Heart left ventricle (tissue), 16 donors: ENCODE measurements at regions of chr14 and their contacts with region 1.

Region 1: GRCh38 chr14:70816525-70816924 is 7.2 kb upstream of the MAP3K9 start:
- DNase-seq: no peak
- ATAC-seq: no peak
- H3K4me3 ChIP-seq: no peak overlapping the region
- H3K27ac ChIP-seq: no peak overlapping the region
- H3K4me1 ChIP-seq: peaks cover 0 to 13% (median 7%) of the 10 kb centered on the region in 12 donors
- H3K27me3 ChIP-seq: peaks cover 0 to 10% (median 0%) of the 10 kb centered on the region in 9 donors
- CTCF ChIP-seq: no peak
- POLR2A ChIP-seq: no peak

Region 2: DNA sequence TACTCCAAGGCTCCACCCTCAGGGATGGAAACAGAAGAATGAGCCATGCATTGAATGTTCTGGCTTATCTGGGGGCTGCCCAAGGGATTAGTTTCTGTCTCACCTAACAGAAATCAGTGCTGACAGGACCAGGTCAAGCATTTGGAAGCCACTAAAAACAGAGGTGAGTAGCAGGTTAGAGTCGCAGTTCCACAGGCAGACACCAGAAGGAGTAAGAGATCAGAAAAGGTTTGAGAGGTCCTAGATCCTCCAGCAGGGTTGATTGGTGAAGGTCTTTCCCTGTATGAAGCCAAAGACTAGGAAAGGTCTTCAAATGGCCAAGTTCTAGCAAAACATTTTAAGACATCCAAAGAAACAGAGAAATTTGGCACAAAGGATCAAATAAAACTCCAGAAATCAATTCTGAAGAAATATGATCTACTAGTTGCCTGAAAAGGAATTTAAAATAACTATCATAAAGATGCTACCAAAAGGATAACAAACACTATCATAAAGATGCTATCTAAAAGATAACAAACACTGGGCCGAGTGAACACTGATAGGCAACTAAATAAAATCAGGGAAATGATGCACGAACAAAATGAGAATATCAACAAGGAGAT is 194.3 kb before region 1 on chr14:
- intact Hi-C with region 1: loop called (anchors 2 to 10 kb)
- DNase-seq: no peak
- ATAC-seq: peak in 3 of 4 donors; percentile 47 to 77 (median 56)
- H3K4me3 ChIP-seq: no peak overlapping the region
- H3K27ac ChIP-seq: no peak overlapping the region
- H3K4me1 ChIP-seq: peaks cover 0 to 7% (median 0%) of the 10 kb centered on the region in 12 donors
- H3K27me3 ChIP-seq: no peaks in the 10 kb centered on the region
- CTCF ChIP-seq: peak; percentile 45 to 70 (median 62)
- POLR2A ChIP-seq: no peak

Region 3: DNA sequence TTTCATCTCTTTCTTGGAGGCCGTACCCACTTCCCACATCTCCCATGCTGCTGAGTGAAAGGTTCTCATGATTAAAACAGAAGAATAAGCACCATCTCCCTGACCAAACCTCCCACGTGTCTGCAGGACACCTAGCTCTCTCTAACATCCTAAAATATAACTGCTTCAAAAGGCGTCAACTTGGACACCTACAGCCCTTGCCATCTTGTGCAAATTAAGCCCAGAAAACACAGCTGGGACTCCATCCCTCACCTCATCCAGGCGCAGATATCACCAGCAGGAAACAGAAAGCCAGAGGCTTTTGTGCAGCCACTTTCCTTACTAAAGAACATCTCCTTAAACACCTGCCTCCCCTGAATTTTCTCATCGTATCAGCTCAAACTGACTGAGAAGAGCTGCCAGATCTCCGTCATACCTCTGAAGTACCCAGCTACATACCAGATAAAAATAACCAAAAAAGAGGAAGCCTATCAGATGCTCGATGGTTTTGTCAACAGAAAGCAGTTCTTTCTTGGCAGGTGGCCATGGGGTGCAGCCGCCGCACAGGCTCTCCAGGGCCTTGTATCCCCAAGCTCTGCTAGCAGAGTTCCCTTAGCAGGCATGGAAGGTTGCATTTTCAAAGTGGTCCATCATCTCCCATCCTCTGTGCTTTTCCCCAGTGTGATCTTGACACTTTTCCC is 36.0 kb before region 1 on chr14:
- intact Hi-C with region 1: no loop called
- DNase-seq: peak in 3 of 5 donors; percentile 20 to 35 (median 28)
- ATAC-seq: no peak
- H3K4me3 ChIP-seq: no peak overlapping the region
- H3K27ac ChIP-seq: peak overlapping the region in 1 of 12 donors; percentile 7
- H3K4me1 ChIP-seq: peaks cover 0 to 18% (median 0%) of the 10 kb centered on the region in 12 donors
- H3K27me3 ChIP-seq: no peaks in the 10 kb centered on the region
- CTCF ChIP-seq: no peak
- POLR2A ChIP-seq: no peak

Region 4: DNA sequence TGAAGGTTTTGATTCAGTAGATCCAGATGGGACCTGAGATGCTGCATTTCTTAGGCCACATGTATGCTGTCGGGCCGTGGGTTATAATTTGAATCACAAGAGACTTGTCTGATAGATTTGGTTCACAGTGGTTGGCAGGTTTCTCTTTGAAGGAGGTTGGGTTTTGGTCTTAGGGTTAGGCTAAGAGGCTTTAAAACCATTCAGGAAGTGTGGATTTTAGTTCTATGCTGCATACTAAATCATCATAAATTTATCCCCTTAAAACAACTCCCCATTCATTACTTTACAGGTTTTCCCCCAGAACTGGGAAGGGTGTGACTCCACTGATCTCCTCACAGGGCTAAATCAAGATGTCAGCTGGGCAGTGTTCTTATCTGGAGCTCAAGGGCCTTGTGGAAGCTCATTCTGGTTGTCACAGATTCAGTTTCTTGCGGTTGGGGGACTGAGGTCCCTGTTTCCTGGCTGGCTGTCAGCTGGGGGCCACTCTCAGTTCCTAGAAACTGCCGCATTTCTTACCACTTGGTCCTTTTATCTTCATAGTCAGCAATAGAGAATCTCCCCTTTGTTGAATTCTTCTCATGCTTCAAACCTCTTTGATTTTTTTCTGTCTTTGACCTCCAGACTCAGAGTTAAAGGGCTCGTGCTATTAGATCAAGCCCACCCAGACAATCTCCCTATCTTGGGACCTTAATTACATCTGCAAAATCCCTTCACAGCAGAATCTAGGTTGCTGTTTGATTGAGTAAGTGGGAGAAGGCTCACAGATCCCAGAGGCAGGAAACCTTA is 70.1 kb after region 1 on chr14:
- intact Hi-C with region 1: no loop called
- DNase-seq: peak in 1 of 5 donors; percentile 29
- ATAC-seq: peak in 1 of 4 donors; percentile 23
- H3K4me3 ChIP-seq: peak overlapping the region in 1 of 12 donors; percentile 8
- H3K27ac ChIP-seq: peak overlapping the region in 1 of 12 donors; percentile 87
- H3K4me1 ChIP-seq: peaks cover 0 to 86% (median 1%) of the 10 kb centered on the region in 12 donors
- H3K27me3 ChIP-seq: no peaks in the 10 kb centered on the region
- CTCF ChIP-seq: no peak
- POLR2A ChIP-seq: no peak

Region 5: GRCh38 chr14:70907176-70907995 is 90.9 kb after region 1 on chr14 and contains the start of gene PCNX1:
- intact Hi-C with region 1: loop called in 8 of 10 experiments (anchors 2 to 5 kb)
- DNase-seq: peak; percentile 90 to 94 (median 91)
- ATAC-seq: peak; percentile 82 to 91 (median 86)
- H3K4me3 ChIP-seq: peak within 1 kb of the TSS; percentile 78 to 99 (median 94)
- H3K27ac ChIP-seq: peak within 1 kb of the TSS; percentile 80 to 98 (median 94)
- H3K4me1 ChIP-seq: peaks cover 0 to 66% (median 50%) of the 10 kb centered on the region in 12 donors
- H3K27me3 ChIP-seq: no peaks in the 10 kb centered on the region
- CTCF ChIP-seq: peak; percentile 73 to 97 (median 89)
- POLR2A ChIP-seq: peak in 1 of 2 donors; percentile 37
- total RNA-seq, gene PCNX1: 36.3 to 64.7 (median 53.4) TPM

Region 6: DNA sequence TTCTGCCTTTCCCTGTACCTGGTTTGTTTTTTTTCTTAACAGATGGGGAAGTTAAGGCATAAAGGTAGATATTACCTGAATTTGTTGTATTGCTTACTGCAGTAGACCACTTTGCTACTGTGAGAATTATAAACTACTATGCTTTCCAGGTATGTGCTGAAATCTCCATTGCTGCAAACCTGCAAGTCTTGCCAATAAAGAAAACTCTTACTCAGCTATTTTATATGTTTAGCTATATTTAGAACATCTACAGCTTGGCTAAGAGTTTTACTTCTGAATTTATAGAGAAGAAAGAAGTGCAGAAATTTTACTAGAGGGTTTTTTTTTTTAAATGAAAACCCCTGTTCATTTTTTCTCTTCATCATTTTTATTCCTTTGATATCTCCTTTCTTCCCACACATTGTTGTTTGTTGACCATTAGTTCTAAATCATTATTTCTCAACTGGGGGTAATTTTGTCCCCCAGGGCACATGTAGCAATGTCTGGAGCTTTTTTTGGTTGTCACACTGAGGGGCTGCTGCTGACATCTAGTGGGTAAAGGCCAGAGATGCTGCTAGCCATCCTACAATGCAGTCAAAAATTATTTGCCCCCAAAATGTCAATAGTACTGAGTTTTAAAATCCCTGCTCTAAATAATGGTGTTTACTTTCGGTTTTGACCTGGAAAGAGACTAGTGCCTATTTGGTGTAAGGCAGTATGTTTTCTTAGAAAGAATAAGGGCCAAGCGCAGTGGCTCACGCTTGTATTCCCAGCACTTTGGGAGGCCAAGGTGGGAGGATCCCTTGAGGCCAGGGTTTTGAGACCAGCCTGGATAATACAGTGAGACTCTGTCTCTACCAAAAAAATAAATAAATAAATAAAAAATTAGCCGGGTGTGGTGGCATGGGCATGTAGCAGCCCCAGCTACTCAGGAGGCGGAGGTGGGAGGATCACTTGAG is 139.3 kb after region 1 on chr14:
- intact Hi-C with region 1: loop called in 4 of 10 experiments (anchors 5 kb)
- DNase-seq: no peak
- ATAC-seq: peak in 3 of 4 donors; percentile 49 to 55 (median 54)
- H3K4me3 ChIP-seq: no peak overlapping the region
- H3K27ac ChIP-seq: no peak overlapping the region
- H3K4me1 ChIP-seq: peaks cover 0 to 47% (median 24%) of the 10 kb centered on the region in 12 donors
- H3K27me3 ChIP-seq: no peaks in the 10 kb centered on the region
- CTCF ChIP-seq: peak in 11 of 12 donors; percentile 34 to 67 (median 54)
- POLR2A ChIP-seq: no peak

Region 7: GRCh38 chr14:70972107-70972976 is 155.8 kb after region 1 on chr14:
- intact Hi-C with region 1: loop called (anchors 1 to 5 kb)
- DNase-seq: peak; percentile 64 to 84 (median 81)
- ATAC-seq: peak; percentile 60 to 89 (median 87)
- H3K4me3 ChIP-seq: no peak overlapping the region
- H3K27ac ChIP-seq: no peak overlapping the region
- H3K4me1 ChIP-seq: peaks cover 0 to 15% (median 4%) of the 10 kb centered on the region in 12 donors
- H3K27me3 ChIP-seq: no peaks in the 10 kb centered on the region
- CTCF ChIP-seq: peak; percentile 88 to 98 (median 94)
- POLR2A ChIP-seq: no peak